ENCODE measurements at regions of chr13 and their contacts with region 1.

Region 1: DNA sequence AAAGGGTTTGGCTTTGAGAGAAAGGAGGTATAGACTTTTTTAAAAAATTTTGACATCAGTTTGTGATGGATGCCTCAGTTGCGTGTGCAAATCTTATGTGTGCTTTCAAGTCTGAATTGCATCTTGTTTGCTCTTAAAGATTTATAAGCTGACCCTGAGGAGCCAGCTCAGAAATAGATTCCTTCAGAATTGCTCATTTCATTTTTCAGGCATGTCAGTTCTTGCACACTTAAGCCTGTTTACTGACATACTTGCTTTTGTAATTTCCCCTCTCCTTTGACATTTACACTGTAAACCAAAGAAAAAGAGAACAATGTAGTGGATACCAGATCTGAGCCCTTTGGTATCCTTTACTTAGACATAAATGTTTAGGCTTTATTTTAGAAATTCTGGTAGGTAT is 87.6 kb downstream of the RNF17 start:
- DNase-seq: no peak
- H3K4me3 ChIP-seq: no peak overlapping the region
- H3K4me3 Mint-ChIP-seq: no peak overlapping the region
- H3K27ac Mint-ChIP-seq: no peak overlapping the region
- H3K4me1 ChIP-seq: no peaks in the 10 kb centered on the region
- H3K4me1 Mint-ChIP-seq: no peaks in the 10 kb centered on the region
- H3K27me3 ChIP-seq: no peaks in the 10 kb centered on the region
- H3K27me3 Mint-ChIP-seq: peaks cover 4% of the 10 kb centered on the region
- CTCF ChIP-seq: no peak

Region 2: GRCh38 chr13:24982333-24982999 is 130.9 kb after region 1 on chr13:
- CTCF ChIA-PET with region 1: no interaction called
- POLR2A ChIA-PET with region 1: no interaction called
- intact Hi-C with region 1: loop called (anchors 10 kb)
- DNase-seq: no peak
- H3K4me3 ChIP-seq: no peak overlapping the region
- H3K4me3 Mint-ChIP-seq: no peak overlapping the region
- H3K27ac Mint-ChIP-seq: no peak overlapping the region
- H3K4me1 ChIP-seq: no peaks in the 10 kb centered on the region
- H3K4me1 Mint-ChIP-seq: no peaks in the 10 kb centered on the region
- H3K27me3 ChIP-seq: no peaks in the 10 kb centered on the region; the same call in 1 of the 2 replicates
- H3K27me3 Mint-ChIP-seq: peaks cover 14% of the 10 kb centered on the region
- CTCF ChIP-seq: no peak